CD8-positive, alpha-beta T cell (primary cell): ENCODE measurements at regions of chr2 and their contacts with region 1.

Region 1: DNA sequence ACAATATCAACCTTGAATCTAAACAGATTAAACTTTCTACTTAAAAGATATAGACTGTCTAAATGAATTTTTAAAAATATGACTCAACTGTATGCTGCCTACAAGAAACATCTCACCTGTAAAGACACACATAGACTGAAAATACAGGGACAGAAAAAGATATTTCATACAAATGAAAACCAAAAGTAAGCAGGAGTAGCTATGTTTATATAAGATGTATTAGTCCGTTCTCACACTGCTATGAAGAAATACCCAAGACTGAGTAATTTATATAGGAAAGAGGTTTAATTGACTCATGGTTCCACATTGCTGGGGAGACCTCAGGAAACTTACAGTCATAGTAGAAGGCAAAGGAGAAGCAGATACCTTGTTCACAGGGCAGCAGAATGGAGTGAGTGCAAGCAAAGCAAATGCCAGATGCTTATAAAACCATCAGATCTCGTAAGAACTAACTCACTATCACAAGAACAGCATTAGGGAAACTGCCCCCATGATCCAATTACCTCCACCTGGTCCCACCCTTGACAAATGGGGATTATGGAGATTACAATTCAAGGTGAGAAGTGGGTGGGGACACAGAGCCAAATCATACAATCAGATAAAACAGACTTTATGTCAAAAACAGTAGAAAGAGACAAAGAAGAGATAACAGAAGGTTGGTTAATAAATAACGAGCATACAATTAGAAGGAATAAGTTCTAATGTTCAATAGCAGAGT is 214.4 kb upstream of the SLC39A10 start:
- DNase-seq: no peak
- ATAC-seq: no peak
- H3K4me3 ChIP-seq: no peak overlapping the region
- H3K4me3 Mint-ChIP-seq: no peak overlapping the region
- H3K27ac ChIP-seq: no peak overlapping the region
- H3K27ac Mint-ChIP-seq: no peak overlapping the region
- H3K4me1 ChIP-seq: no peaks in the 10 kb centered on the region
- H3K4me1 Mint-ChIP-seq: no peaks in the 10 kb centered on the region
- H3K27me3 ChIP-seq: no peaks in the 10 kb centered on the region
- H3K27me3 Mint-ChIP-seq: no peaks in the 10 kb centered on the region
- CTCF ChIP-seq: no peak

Region 2: GRCh38 chr2:194985258-194985657 is 457.4 kb before region 1 on chr2:
- CTCF ChIA-PET with region 1: no interaction called
- POLR2A ChIA-PET with region 1: no interaction called
- intact Hi-C with region 1: loop called in 1 of 2 experiments (anchors 5 kb)
- DNase-seq: no peak
- ATAC-seq: no peak
- H3K4me3 ChIP-seq: no peak overlapping the region
- H3K4me3 Mint-ChIP-seq: no peak overlapping the region
- H3K27ac ChIP-seq: no peak overlapping the region
- H3K27ac Mint-ChIP-seq: no peak overlapping the region
- H3K4me1 ChIP-seq: no peaks in the 10 kb centered on the region
- H3K4me1 Mint-ChIP-seq: no peaks in the 10 kb centered on the region
- H3K27me3 ChIP-seq: no peaks in the 10 kb centered on the region
- H3K27me3 Mint-ChIP-seq: no peaks in the 10 kb centered on the region
- CTCF ChIP-seq: no peak